Activated T-helper 2 cell treated with anti-CD3 and anti-CD28 coated beads, Interferon-gamma antibody, Interleukin-2, Interleukin-4, amounts not matched to agents 10 μg/mL and 5 μg/mL and 100 μg/mL, durations not matched to agents 14 hours and 24 hours and 36 hours (primary cell): ENCODE measurements at regions of chr17 and their contacts with region 1.

Region 1: GRCh38 chr17:3913531-3914311 is 2.5 kb downstream of the P2RX1 start:
- DNase-seq: peak; percentile 75
- H3K4me3 Mint-ChIP-seq: peak overlapping the region; percentile 30
- H3K27ac Mint-ChIP-seq: peak overlapping the region; percentile 57
- H3K4me1 Mint-ChIP-seq: peaks cover 40% of the 10 kb centered on the region
- H3K27me3 Mint-ChIP-seq: no peaks in the 10 kb centered on the region

Region 2: GRCh38 chr17:3965118-3965803 is 51.5 kb after region 1 on chr17:
- intact Hi-C with region 1: loop called (anchors 5 kb)
- DNase-seq: peak; percentile 73
- H3K4me3 Mint-ChIP-seq: peak overlapping the region; percentile 85
- H3K27ac Mint-ChIP-seq: peak overlapping the region; percentile 86
- H3K4me1 Mint-ChIP-seq: peaks cover 45% of the 10 kb centered on the region
- H3K27me3 Mint-ChIP-seq: no peaks in the 10 kb centered on the region

Region 3: DNA sequence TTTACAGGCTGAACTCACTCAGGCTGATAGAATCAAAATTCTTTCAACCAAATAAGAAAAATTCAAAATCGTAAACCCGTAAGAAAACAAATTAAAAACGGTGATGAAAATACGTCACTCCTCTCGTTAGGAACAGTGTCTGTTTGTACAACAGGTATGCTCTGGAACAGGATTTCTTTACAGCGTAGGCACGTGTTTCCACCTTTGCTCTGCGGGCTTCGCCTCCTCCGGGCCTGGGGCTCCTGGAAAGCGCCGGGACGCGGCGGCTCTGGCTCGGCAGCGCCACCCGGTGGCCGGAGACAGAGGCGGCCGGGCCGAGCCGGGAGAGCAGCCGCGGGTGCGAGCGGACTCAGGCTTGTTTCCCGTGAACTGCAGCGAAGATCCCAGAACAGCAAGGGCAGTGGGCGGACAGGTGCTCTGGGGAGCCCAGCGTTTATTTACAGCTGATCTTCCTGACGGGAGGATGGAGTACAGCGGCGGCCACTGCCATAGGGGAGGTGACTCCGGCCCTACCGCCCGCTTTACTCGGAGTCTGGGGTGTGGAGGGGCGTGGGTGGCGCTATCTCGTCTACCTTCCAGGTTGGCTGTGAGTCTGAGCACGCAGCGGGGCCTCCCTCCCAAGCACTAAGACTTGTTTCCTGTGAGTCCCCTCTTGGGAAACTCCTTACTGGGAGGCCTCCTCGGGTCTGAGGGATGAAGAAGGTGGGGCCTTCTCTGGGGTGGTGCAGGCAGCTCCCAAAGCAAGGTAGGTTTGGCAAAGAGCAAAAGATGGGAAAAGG is 91.0 kb after region 1 on chr17:
- intact Hi-C with region 1: loop called (anchors 1 kb)
- DNase-seq: peak; percentile 43
- H3K4me3 Mint-ChIP-seq: no peak overlapping the region
- H3K27ac Mint-ChIP-seq: no peak overlapping the region
- H3K4me1 Mint-ChIP-seq: peaks cover 1% of the 10 kb centered on the region
- H3K27me3 Mint-ChIP-seq: peaks cover 3% of the 10 kb centered on the region

Region 4: GRCh38 chr17:4074831-4075495 is 161.2 kb after region 1 on chr17:
- intact Hi-C with region 1: loop called (anchors 1 kb)
- DNase-seq: no peak
- H3K4me3 Mint-ChIP-seq: no peak overlapping the region
- H3K27ac Mint-ChIP-seq: no peak overlapping the region
- H3K4me1 Mint-ChIP-seq: no peaks in the 10 kb centered on the region
- H3K27me3 Mint-ChIP-seq: no peaks in the 10 kb centered on the region